ENCODE measurements at regions of chr11 and their contacts with region 1.

Region 1: GRCh38 chr11:19561011-19561410 is 151.6 kb upstream of the NAV2 start:
- ATAC-seq: peak in 2 of 8 experiments; percentile 21 to 43
- H3K4me3 ChIP-seq: no peak overlapping the region
- H3K27ac ChIP-seq: no peak overlapping the region
- H3K4me1 ChIP-seq: peaks cover 15% of the 10 kb centered on the region in 2 donors

Region 2: DNA sequence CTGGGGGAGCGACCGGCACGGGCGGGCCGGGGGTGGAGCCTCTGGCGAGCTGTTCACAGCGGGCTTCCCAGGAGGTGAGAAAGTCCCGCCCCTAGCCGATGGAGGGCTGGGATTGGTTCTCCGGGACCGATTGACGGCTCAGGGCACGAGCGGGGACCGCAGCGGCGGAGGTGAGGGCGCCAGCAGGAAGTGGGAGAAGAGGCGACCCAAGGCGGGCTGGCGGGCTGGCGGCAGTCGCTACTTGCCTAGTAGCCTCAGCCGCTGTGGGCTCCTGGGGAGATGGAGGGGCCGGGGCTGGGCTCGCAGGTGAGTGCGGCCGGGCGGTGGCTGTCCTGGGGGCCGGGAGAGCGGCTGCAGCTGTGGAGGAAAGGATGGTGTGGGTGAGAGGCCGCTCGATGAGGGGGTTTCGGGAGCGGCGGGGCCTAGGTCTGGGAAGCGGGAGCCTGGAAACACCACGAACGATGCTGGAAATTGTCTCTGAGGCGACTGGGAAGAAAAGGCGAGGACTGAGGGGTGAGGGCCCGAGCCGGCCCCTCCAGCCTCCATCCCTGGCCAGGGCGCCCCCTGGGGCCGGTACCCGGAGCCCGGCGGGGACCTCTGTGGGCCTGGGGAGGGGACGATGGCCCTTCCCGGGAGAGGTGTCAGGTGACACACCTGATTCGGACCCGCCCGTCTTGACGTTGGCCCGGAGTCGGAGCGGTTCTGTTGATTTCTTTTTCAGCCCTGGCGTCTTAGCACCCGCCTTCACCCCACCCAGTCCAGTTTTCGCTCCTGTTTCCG is 443.9 kb before region 1 on chr11 and contains the start of gene ZDHHC13:
- in situ Hi-C with region 1: no loop called
- ATAC-seq: peak; percentile 97 to 100 (median 99)
- H3K4me3 ChIP-seq: peak within 1 kb of the TSS; percentile 69 to 92 (median 85)
- H3K27ac ChIP-seq: peak within 1 kb of the TSS; percentile 23 to 69
- H3K4me1 ChIP-seq: peaks cover 0 to 7% of the 10 kb centered on the region in 2 donors
- total RNA-seq, gene ZDHHC13: 7.5 to 22.3 (median 17.4) TPM

Region 3: GRCh38 chr11:19380375-19380774 is 180.6 kb before region 1 on chr11:
- in situ Hi-C with region 1: no loop called
- ATAC-seq: peak in 6 of 8 experiments; percentile 4 to 97 (median 62)
- H3K4me3 ChIP-seq: no peak overlapping the region
- H3K27ac ChIP-seq: no peak overlapping the region
- H3K4me1 ChIP-seq: peaks cover 29 to 37% of the 10 kb centered on the region in 2 donors

Region 4: DNA sequence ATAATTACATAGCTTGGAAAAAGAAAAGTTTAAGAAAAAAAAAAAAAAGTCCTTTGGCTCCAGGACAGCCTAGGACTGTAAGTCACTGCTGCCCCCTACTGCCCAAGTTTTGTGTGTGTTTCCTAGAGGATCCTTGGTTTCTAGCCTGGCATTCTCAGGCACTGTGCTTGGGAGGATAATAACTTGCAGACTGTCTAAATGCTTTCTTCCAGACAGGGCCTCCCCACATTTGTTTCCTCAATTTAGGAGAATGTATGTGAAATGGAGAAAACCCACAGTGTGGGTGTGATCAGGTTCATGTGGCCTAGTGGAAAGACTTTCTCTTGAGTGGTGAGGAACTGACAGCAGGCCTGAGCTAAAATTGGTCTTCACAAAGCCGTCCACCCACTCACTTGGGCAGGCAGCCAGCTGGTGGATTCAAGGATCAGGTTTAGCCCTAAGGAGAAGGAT is 342.6 kb after region 1 on chr11:
- in situ Hi-C with region 1: loop called (anchors 10 to 25 kb)
- ATAC-seq: peak; percentile 72 to 91 (median 80)
- H3K4me3 ChIP-seq: no peak overlapping the region
- H3K27ac ChIP-seq: no peak overlapping the region
- H3K4me1 ChIP-seq: peaks cover 0 to 8% of the 10 kb centered on the region in 2 donors